Activated CD4-positive, alpha-beta T cell treated with anti-CD3 and anti-CD28 coated beads, Interleukin-2, amount 10 ng/mL, durations not matched to agents 24 days and 14 days (primary cell): ENCODE measurements at regions of chr5 and their contacts with region 1.

Region 1: GRCh38 chr5:107289030-107289714 is 381.6 kb downstream of the EFNA5 start:
- DNase-seq: no peak
- H3K4me3 Mint-ChIP-seq: no peak overlapping the region
- H3K27ac Mint-ChIP-seq: peak overlapping the region; percentile 40
- H3K4me1 Mint-ChIP-seq: peaks cover 15% of the 10 kb centered on the region
- H3K27me3 Mint-ChIP-seq: no peaks in the 10 kb centered on the region

Region 2: DNA sequence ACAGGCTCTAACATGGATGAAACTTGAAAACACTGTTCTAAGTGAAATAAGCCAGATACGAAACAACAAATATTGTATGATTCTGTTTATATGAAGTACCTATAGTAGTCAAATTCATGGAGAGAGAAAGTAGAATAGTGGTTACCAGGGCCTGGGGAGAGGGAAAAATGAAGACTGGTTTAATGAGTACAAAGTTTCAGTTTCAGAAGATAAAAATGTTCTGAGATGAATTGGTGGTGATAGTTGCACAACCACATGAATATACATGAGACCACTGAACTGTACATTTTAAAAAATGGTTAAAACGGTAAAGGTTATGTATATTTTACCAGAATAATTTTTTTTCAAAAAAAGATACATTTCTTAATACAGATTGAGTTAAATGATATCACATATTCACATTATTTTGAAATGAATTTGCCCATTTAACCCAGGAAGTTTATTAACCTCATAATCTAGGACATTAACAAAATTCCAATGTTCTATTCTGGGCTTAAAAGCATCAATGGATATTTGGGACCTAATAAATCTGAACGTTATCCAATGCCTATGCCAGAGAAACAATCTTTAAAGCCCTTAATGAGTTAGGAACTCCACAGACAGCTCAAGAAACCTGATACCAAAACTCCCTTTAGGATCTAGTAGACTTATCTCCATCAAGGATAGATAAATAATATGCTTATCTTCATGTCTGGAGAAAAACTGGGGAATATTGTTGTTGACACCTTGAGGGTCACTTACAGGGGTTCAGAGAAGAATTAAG is 139.7 kb before region 1 on chr5:
- intact Hi-C with region 1: loop called (anchors 5 kb)
- DNase-seq: no peak
- H3K4me3 Mint-ChIP-seq: no peak overlapping the region
- H3K27ac Mint-ChIP-seq: no peak overlapping the region
- H3K4me1 Mint-ChIP-seq: no peaks in the 10 kb centered on the region
- H3K27me3 Mint-ChIP-seq: no peaks in the 10 kb centered on the region

Region 3: DNA sequence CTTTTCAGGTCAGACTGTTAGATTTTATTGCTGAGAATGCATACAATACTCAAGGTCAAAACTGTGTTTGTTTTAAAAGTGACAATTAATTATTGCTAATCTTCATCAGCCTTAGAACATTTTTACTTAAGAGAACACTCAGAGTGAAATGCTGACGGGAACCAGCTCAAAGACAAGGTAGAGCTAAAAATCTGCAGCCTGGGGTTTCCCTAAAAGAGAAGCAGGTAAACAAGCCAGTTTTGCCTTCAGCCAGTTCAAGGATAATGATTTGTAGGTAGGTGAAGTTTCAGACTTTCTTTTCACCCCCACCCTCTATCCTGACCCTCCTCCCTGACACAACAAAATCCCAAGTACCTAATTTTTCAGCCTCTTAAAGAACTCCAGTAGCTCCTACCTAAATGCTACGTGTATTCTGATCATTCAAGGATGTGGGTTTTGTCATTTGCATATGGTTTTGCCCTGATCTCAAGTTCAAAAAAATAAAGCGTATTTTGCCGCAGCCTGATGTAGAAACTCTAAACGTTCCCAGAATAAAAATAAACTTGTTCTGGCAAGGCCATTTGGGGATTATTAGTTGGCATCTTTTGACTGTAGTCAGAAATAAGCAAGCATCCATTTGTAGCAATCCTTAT is 25.7 kb before region 1 on chr5:
- intact Hi-C with region 1: loop called (anchors 1 kb)
- DNase-seq: peak; percentile 61
- H3K4me3 Mint-ChIP-seq: no peak overlapping the region
- H3K27ac Mint-ChIP-seq: no peak overlapping the region
- H3K4me1 Mint-ChIP-seq: no peaks in the 10 kb centered on the region
- H3K27me3 Mint-ChIP-seq: no peaks in the 10 kb centered on the region

Region 4: GRCh38 chr5:107389130-107389774 is 100.1 kb after region 1 on chr5:
- intact Hi-C with region 1: loop called (anchors 1 kb)
- DNase-seq: peak; percentile 78
- H3K4me3 Mint-ChIP-seq: peak overlapping the region; percentile 33
- H3K27ac Mint-ChIP-seq: peak overlapping the region; percentile 85
- H3K4me1 Mint-ChIP-seq: peaks cover 20% of the 10 kb centered on the region
- H3K27me3 Mint-ChIP-seq: peaks cover 4% of the 10 kb centered on the region

Region 5: DNA sequence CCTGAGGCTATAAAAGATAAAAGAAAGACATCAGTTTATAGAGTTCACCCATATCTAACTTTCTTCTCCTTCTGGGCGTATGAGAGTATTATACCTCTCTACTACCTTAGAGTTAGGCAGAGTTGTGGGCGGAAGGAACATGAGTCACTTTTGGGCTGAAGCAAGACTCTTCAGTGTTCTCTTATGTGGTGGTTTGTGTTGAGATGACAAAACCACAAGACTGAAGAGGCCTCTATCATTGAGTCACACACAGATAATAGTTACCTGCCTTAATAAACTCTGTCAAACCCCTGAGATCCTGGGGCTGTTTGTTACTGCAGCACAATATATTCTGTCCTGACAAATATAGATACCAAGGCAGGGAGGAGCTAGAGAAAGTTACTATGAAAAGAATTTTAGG is 197.3 kb after region 1 on chr5:
- intact Hi-C with region 1: loop called (anchors 2 kb)
- DNase-seq: peak; percentile 79
- H3K4me3 Mint-ChIP-seq: no peak overlapping the region
- H3K27ac Mint-ChIP-seq: no peak overlapping the region
- H3K4me1 Mint-ChIP-seq: peaks cover 20% of the 10 kb centered on the region
- H3K27me3 Mint-ChIP-seq: peaks cover 10% of the 10 kb centered on the region